Heart left ventricle (tissue), 16 donors: ENCODE measurements at regions of chr20 and their contacts with region 1.

Region 1: GRCh38 chr20:11216451-11217314 is 542.9 kb upstream of the JAG1 start:
- DNase-seq: no peak
- ATAC-seq: peak in 3 of 4 donors; percentile 26 to 45 (median 41)
- H3K4me3 ChIP-seq: no peak overlapping the region
- H3K27ac ChIP-seq: peak overlapping the region in 5 of 12 donors; percentile 10 to 32 (median 25)
- H3K4me1 ChIP-seq: peaks cover 0 to 26% (median 17%) of the 10 kb centered on the region in 12 donors
- H3K27me3 ChIP-seq: no peaks in the 10 kb centered on the region
- CTCF ChIP-seq: no peak
- POLR2A ChIP-seq: no peak

Region 2: GRCh38 chr20:11267131-11267761 is 50.6 kb after region 1 on chr20:
- intact Hi-C with region 1: loop called in 2 of 10 experiments (anchors 5 to 10 kb)
- DNase-seq: peak in 4 of 5 donors; percentile 52 to 68 (median 64)
- ATAC-seq: peak; percentile 83 to 98 (median 94)
- H3K4me3 ChIP-seq: no peak overlapping the region
- H3K27ac ChIP-seq: peak overlapping the region in 11 of 12 donors; percentile 7 to 68 (median 37)
- H3K4me1 ChIP-seq: peaks cover 0 to 23% (median 17%) of the 10 kb centered on the region in 12 donors
- H3K27me3 ChIP-seq: no peaks in the 10 kb centered on the region
- CTCF ChIP-seq: peak in 1 of 12 donors; percentile 18
- POLR2A ChIP-seq: no peak